AG04450 (cell line): ENCODE measurements at regions of chr10 and their contacts with region 1.

Region 1: DNA sequence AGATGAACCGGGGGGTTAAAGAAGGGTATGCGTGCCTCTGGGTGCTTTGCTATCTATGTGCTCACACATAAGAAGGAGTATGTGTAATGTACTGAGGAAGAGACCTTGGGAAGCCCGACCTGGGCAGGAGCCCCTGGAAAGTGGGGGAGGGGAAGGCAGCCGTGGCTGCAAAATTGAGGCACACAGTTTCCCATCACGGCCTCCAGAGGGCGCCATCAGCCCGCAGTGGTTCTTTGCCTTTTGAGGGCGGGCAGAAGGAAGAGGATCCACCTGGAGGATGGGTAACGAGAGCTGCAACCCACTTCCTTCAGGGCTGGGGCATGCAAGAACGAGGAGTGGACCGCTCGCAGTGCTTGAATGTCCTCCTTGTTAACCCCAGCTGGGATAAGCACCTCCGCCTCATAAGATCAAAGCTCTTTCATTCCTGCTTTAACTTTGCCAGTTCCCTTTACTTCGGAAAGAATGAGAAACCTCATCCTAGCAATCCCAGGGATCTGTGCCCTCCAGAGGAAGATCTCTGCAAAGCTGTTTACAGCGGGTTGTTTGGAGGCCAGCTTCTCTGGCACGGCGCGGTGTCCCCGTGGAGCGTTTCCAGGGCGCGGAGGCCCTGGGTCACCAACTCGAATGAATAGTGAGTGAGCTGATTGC is 77.9 kb downstream of the PCGF5 start:
- DNase-seq: peak; percentile 55
- H3K4me3 ChIP-seq: peak overlapping the region; percentile 54
- H3K27ac ChIP-seq: peak overlapping the region; percentile 21
- H3K27me3 ChIP-seq: no peaks in the 10 kb centered on the region
- CTCF ChIP-seq: peak; percentile 95

Region 2: DNA sequence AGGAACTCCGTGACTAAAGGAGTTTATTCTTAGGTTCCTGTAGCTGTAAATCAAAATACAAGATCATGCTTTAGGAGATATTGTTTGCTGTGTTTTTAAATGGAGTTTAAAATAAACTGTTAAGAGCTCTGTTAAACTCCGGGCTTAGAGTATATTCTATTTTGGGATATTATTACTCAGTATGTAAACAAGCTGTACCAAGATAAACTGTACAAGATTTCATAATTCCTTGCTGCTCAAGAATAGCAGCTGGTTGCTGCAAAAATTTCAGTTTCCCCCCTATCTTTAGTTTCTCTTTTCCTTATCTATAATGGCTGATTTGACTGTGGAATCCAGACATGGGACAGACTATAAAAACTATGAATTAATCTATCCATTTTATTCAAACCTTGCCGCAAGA is 656.2 kb before region 1 on chr10:
- CTCF ChIA-PET with region 1: no interaction called
- POLR2A ChIA-PET with region 1: no interaction called
- DNase-seq: no peak
- H3K4me3 ChIP-seq: no peak overlapping the region
- H3K27ac ChIP-seq: no peak overlapping the region
- H3K27me3 ChIP-seq: no peaks in the 10 kb centered on the region
- CTCF ChIP-seq: no peak

Region 3: DNA sequence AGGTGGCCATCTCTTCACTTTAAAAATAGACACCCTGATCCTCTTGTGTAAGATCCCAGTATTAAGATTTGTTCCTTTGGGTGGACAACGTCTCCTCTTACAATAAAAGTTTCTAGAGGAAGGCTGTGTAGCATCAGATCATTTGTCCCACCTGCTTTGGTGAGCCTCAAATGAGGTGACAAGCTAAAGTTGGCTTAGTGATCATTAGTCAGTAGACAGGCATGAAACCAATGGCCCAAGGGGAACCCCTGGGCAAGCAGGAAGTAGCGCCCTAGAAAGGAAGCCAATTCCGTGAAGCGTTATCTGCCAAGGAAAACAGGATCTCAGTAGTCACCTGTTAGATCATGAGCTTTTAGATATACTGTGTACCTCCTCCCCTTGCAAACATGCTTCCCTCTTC is 11.1 kb before region 1 on chr10:
- CTCF ChIA-PET with region 1: interaction called, 37 read pairs
- POLR2A ChIA-PET with region 1: no interaction called
- DNase-seq: no peak
- H3K4me3 ChIP-seq: no peak overlapping the region
- H3K27ac ChIP-seq: no peak overlapping the region
- H3K27me3 ChIP-seq: peaks cover 6% of the 10 kb centered on the region
- CTCF ChIP-seq: no peak

Region 4: DNA sequence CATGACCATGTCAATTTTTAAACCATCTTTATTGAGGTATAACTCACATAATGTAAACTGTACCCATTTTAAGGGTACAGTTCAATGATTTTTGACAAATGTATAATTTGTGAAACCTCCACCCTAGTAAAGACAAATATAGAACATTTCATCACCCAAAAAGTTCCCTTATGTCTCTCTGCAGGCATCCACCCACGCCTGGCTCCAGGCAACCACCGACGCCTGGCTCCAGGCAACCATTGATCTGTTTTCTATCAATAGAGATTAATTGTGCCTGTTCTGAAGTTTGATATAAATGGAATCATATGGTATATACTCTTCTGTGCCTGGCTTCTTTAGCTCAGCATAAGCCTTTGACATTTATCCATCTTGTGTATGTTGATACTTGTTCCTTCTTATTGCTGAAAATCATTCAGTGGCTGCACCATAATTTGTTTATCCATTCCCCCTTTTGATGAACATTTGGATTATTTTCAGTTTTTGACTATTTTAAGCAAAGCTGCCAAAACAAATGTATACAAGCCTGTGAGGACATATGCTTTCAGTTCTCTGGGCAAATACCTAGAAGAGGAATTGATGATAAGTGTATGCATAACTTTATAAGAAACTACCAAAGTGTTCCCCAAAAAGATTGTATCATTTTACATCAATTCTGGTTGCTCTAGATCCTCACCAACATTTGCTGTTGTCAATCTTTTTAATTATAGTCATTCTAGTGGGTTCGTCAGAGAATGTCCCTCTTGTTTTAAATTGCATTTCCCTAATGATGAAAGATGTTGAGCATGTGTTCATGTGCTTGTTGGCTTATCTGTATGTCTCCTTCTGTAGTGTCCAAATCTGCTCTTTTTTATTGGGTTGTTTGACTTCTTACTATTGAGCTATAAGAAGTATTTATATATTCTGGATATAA is 56.1 kb after region 1 on chr10:
- CTCF ChIA-PET with region 1: interaction called, 14 read pairs
- POLR2A ChIA-PET with region 1: no interaction called
- DNase-seq: no peak
- H3K4me3 ChIP-seq: no peak overlapping the region
- H3K27ac ChIP-seq: no peak overlapping the region
- H3K27me3 ChIP-seq: peaks cover 7% of the 10 kb centered on the region
- CTCF ChIP-seq: no peak

Region 5: DNA sequence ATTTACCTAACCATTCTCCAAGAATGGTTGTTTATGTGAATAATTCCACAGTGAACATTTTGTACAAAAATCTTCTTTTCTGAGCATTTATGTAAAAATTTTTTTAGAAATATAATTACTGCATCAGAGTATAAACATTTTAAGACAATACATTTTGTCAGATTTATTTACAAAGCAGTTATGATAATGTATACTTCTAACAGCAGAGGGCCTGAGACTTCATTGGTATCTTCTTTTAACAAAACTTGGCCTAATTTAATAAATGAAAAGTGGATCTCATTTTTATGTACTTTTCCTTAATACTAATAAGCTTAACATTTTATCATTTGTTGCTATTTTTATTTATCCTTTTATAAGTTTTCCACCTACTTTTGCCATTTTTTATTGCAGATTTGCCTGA is 181.2 kb after region 1 on chr10:
- CTCF ChIA-PET with region 1: interaction called, 11 read pairs
- POLR2A ChIA-PET with region 1: no interaction called
- DNase-seq: no peak
- H3K4me3 ChIP-seq: no peak overlapping the region
- H3K27ac ChIP-seq: no peak overlapping the region
- H3K27me3 ChIP-seq: no peaks in the 10 kb centered on the region
- CTCF ChIP-seq: no peak

Region 6: GRCh38 chr10:91579329-91579985 is 281.1 kb after region 1 on chr10:
- CTCF ChIA-PET with region 1: interaction called, 13 read pairs
- POLR2A ChIA-PET with region 1: no interaction called
- DNase-seq: no peak
- H3K4me3 ChIP-seq: no peak overlapping the region
- H3K27ac ChIP-seq: no peak overlapping the region
- H3K27me3 ChIP-seq: no peaks in the 10 kb centered on the region
- CTCF ChIP-seq: no peak